ENCODE measurements at regions of chr5 and their contacts with region 1.

Region 1: GRCh38 chr5:174045470-174046025 is at the start of gene NSG2:
- DNase-seq: peak; percentile 94
- ATAC-seq: peak; percentile 100
- H3K4me3 Mint-ChIP-seq: no peak within 1 kb of the TSS
- H3K27ac Mint-ChIP-seq: no peak within 1 kb of the TSS
- H3K4me1 Mint-ChIP-seq: 0 out of 2 replicates have a peak, but pooled peaks cover 4% of the 10 kb centered on the region
- H3K27me3 Mint-ChIP-seq: peaks cover 6% of the 10 kb centered on the region; the same call in 1 of the 2 replicates
- CTCF ChIP-seq: no peak
- total RNA-seq, gene NSG2: 0.14 TPM in 1 of 3 replicates, not detected in the others

Region 2: GRCh38 chr5:173823711-173824528 is 221.6 kb before region 1 on chr5:
- CTCF ChIA-PET with region 1: no interaction called
- POLR2A ChIA-PET with region 1: no interaction called
- DNase-seq: no peak
- ATAC-seq: peak; percentile 47
- H3K4me3 Mint-ChIP-seq: no peak overlapping the region
- H3K27ac Mint-ChIP-seq: peak overlapping the region; percentile 57
- H3K4me1 Mint-ChIP-seq: peaks cover 26% of the 10 kb centered on the region
- H3K27me3 Mint-ChIP-seq: no peaks in the 10 kb centered on the region; the same call in 1 of the 2 replicates
- CTCF ChIP-seq: no peak

Region 3: DNA sequence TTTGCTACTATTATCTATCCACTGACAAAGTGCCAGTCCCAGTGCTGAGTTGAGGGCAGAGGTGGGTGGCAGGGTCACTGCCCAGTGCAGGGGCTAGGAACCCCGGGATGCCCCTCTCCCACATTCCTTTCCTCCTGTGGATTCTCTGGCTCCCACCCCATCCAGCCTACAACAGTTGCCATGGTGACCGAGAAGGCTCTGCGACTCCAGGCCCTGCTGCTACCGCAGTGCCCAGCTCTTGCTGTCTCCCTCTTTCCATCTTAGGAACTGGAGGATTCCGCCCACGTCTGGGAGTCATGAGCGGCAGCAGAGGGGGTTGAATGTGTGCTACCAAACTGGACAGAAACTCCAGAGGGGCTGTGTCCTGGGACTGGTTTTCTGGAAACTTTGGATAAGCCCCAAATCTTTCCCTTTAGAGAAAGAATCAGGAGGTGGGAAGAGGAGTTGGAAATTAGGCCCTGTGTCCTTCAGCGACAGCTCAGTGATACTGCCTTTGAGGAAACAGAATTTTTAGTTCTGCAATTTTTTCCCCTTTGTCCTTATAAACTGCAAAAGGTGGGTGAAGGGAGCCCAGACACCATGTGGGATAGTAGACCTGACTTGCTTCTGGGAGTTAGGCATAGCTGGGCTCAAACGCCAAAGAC is 77.3 kb before region 1 on chr5:
- CTCF ChIA-PET with region 1: no interaction called
- POLR2A ChIA-PET with region 1: no interaction called
- DNase-seq: peak; percentile 38
- ATAC-seq: peak; percentile 15
- H3K4me3 Mint-ChIP-seq: no peak overlapping the region
- H3K27ac Mint-ChIP-seq: peak overlapping the region; percentile 66
- H3K4me1 Mint-ChIP-seq: peaks cover 68% of the 10 kb centered on the region
- H3K27me3 Mint-ChIP-seq: peaks cover 3% of the 10 kb centered on the region; the same call in 1 of the 2 replicates
- CTCF ChIP-seq: no peak

Region 4: GRCh38 chr5:174020397-174021296 is 24.9 kb before region 1 on chr5:
- CTCF ChIA-PET with region 1: interaction called, 10 read pairs
- POLR2A ChIA-PET with region 1: no interaction called
- DNase-seq: peak; percentile 61
- ATAC-seq: peak; percentile 89
- H3K4me3 Mint-ChIP-seq: peak overlapping the region; percentile 82
- H3K27ac Mint-ChIP-seq: peak overlapping the region; percentile 17; the same call in 1 of the 2 replicates
- H3K4me1 Mint-ChIP-seq: peaks cover 27% of the 10 kb centered on the region
- H3K27me3 Mint-ChIP-seq: peaks cover 7% of the 10 kb centered on the region; the same call in 1 of the 2 replicates
- CTCF ChIP-seq: peak; percentile 53

Region 5: GRCh38 chr5:174056064-174056847 is 10.7 kb after region 1 on chr5:
- CTCF ChIA-PET with region 1: interaction called, 24 read pairs
- POLR2A ChIA-PET with region 1: no interaction called
- DNase-seq: no peak
- ATAC-seq: no peak
- H3K4me3 Mint-ChIP-seq: no peak overlapping the region
- H3K27ac Mint-ChIP-seq: no peak overlapping the region
- H3K4me1 Mint-ChIP-seq: no peaks in the 10 kb centered on the region
- H3K27me3 Mint-ChIP-seq: peaks cover 4% of the 10 kb centered on the region; the same call in 1 of the 2 replicates
- CTCF ChIP-seq: no peak

Region 6: DNA sequence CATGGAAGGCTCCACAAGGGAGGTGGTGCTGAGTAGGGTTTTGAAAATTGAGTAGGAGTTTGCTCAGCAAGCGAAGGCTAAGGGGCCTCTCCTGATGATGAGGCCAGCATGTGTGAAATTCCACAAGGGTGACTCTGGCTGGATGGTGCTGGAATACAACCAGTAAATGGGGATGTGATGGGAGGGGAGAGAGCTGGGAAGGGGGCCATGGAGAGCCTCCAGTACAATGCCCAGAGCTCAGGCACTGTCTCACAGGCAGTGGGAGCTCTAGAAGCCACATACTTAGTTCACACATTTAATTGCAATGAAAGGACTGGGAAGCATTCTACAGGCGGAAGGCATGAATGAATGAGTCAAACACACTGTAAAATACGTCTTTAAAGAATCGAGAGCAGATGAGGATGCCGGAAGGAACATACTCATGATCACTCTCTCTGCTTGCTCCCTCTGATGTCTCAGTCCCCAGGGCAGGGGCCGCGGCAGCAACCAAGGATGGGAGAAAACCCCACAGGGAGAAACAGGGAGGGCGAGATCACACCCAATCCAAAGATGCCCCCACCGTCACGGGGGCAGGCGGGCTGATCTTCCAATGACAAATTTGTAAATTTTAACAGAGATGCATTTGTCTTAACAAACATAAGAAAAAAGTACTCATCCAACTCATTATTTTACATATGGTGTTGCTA is 260.9 kb after region 1 on chr5:
- CTCF ChIA-PET with region 1: interaction called, 148 read pairs
- POLR2A ChIA-PET with region 1: interaction called, 8 read pairs
- DNase-seq: no peak
- ATAC-seq: no peak
- H3K4me3 Mint-ChIP-seq: no peak overlapping the region
- H3K27ac Mint-ChIP-seq: no peak overlapping the region
- H3K4me1 Mint-ChIP-seq: peaks cover 15% of the 10 kb centered on the region
- H3K27me3 Mint-ChIP-seq: peaks cover 8% of the 10 kb centered on the region
- CTCF ChIP-seq: no peak